Heart right ventricle (tissue), 16 donors: ENCODE measurements at regions of chr17 and their contacts with region 1.

Region 1: DNA sequence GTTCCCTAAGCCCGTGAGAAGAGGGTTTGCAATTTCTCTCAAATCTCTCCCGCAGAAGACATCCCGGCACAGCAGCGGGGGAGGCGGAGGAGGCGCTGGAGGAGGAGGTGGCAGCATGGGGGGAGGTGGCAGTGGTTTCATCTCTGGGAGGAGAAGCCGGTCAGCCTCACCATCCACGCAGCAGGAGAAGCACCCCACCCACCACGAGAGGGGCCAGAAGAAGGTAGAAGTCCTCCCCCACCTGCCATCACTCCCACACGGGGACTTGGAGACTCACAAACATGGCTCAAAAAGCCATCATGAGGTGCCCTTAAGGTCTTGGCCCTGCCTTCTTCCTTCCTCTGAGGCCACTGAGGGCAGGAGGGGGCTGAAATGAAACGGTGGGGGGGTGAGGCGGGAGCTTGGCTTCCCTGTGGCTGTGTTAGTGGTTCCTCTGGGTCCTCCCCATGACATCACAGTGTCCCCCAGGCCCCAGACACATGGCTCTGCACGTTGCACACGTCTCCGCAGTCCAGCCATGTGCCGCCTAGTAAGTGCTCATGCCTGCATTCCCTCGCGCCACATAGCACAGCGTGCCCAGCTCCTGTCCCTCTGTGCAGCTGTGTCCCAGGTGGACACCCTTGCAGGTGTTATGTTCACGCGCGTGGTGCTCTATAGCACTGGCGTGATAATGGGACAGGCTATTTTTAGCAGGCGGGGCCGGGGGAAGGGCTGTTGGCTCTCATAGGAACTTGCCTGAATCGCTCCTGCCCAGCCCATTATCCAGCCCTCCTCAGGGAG is 6.9 kb downstream of the MLLT6 start:
- DNase-seq: no peak
- ATAC-seq: peak; percentile 34 to 75 (median 52)
- H3K4me3 ChIP-seq: no peak overlapping the region
- H3K27ac ChIP-seq: peak overlapping the region in 3 of 10 donors; percentile 6 to 31 (median 10)
- H3K4me1 ChIP-seq: peaks cover 4 to 53% (median 30%) of the 10 kb centered on the region in 9 donors
- H3K27me3 ChIP-seq: no peaks in the 10 kb centered on the region
- CTCF ChIP-seq: no peak

Region 2: DNA sequence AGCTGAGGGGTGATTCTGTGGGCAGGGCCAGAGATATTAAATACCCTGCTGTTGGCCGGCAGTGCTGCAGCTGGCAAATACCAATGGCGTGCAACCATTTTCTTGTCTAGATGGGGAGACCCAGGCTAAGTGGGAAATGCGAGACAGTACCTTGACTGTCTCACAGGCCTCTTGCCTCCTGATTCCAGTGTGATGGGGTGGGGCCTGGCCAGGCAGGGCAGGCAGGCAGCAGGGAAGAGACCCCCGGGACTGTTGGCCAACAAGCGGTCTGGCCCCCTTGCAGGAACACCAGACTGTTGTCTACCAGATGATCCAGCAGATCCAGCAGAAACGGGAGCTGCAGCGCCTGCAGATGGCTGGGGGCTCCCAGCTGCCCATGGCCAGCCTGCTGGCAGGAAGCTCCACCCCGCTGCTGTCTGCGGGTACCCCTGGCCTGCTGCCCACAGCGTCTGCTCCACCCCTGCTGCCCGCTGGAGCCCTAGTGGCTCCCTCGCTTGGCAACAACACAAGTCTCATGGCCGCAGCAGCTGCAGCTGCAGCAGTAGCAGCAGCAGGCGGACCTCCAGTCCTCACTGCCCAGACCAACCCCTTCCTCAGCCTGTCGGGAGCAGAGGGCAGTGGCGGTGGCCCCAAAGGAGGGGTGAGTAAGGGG is 12.5 kb after region 1 on chr17:
- intact Hi-C with region 1: loop called in 2 of 10 experiments (anchors 2 kb)
- DNase-seq: peak in 1 of 2 donors; percentile 73
- ATAC-seq: peak; percentile 26 to 72 (median 49)
- H3K4me3 ChIP-seq: no peak overlapping the region
- H3K27ac ChIP-seq: peak overlapping the region in 1 of 10 donors; percentile 3
- H3K4me1 ChIP-seq: peaks cover 0 to 40% (median 22%) of the 10 kb centered on the region in 9 donors
- H3K27me3 ChIP-seq: no peaks in the 10 kb centered on the region
- CTCF ChIP-seq: no peak